ENCODE measurements at regions of chr14 and their contacts with region 1.

Region 1: DNA sequence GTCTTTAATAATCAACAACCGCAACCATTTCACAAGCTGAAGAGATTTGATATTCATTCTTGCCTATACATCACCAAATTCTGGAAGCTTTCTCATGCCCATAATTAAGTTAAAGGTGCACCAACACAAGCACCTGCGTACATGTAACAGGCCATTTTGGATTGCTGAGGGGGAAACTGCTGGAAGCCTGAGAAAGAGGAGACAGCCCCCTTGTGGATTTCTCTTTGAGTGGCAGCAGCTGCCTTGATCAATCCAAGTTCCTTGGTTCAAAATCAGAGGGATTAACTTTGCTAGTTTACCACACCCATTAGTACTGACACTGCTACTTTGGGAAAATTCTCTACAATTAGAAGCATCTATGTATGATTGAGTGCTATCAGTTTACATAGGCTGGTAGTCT is 321.1 kb downstream of the NOVA1 start:
- DNase-seq: no peak
- H3K4me3 ChIP-seq: no peak overlapping the region
- H3K27ac ChIP-seq: no peak overlapping the region
- H3K4me1 ChIP-seq: peaks cover 0 to 5% (median under 1%) of the 10 kb centered on the region in 4 experiments; a peak in 2 of 7 replicates
- H3K27me3 ChIP-seq: no peaks in the 10 kb centered on the region
- CTCF ChIP-seq: peak; percentile 39 to 75 (median 74)
- EP300 ChIP-seq: no peak
- POLR2A ChIP-seq: no peak
- RAD21 ChIP-seq: peak; percentile 87 to 89

Region 2: GRCh38 chr14:25833341-25834126 is 443.2 kb before region 1 on chr14:
- CTCF ChIA-PET with region 1: interaction called, 12 read pairs
- POLR2A ChIA-PET with region 1: no interaction called
- DNase-seq: peak in 1 of 2 experiments; percentile 48
- H3K4me3 ChIP-seq: no peak overlapping the region
- H3K27ac ChIP-seq: no peak overlapping the region
- H3K4me1 ChIP-seq: peaks cover 0 to 2% (median 0%) of the 10 kb centered on the region in 4 experiments; a peak in 1 of 7 replicates
- H3K27me3 ChIP-seq: no peaks in the 10 kb centered on the region
- CTCF ChIP-seq: peak; percentile 56 to 72 (median 70)
- EP300 ChIP-seq: no peak
- POLR2A ChIP-seq: no peak
- RAD21 ChIP-seq: peak; percentile 87 to 92

Region 3: DNA sequence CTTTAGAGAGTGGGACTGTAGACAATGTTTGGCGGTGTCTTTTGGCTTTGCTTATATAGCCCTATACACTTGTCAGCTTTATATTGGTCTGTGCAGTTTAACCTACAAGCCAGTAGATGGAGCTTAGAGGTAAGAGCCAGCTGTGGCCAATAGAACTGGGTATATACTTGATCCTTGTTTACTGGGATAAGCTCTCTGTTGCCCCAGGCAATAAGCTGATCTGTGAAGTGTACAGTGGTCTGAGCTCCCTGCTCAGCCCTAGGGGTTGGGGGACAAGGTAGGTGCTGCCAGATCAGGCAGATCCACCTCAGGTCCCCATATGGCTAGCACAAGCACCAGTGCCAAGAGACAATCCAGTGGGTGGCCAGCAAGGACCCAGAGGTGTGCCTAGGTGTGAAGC is 113.0 kb before region 1 on chr14:
- CTCF ChIA-PET with region 1: interaction called, 26 read pairs
- POLR2A ChIA-PET with region 1: no interaction called
- DNase-seq: peak in 1 of 2 experiments; percentile 47
- H3K4me3 ChIP-seq: no peak overlapping the region
- H3K27ac ChIP-seq: no peak overlapping the region
- H3K4me1 ChIP-seq: no peaks in the 10 kb centered on the region
- H3K27me3 ChIP-seq: no peaks in the 10 kb centered on the region
- CTCF ChIP-seq: peak in 2 of 3 experiments; percentile 49 to 59; a peak in 2 of 4 replicates
- EP300 ChIP-seq: no peak
- POLR2A ChIP-seq: no peak
- RAD21 ChIP-seq: peak; percentile 71 to 73

Region 4: GRCh38 chr14:26255213-26255612 is 21.5 kb before region 1 on chr14:
- CTCF ChIA-PET with region 1: interaction called, 13 read pairs
- POLR2A ChIA-PET with region 1: no interaction called
- DNase-seq: no peak
- H3K4me3 ChIP-seq: no peak overlapping the region
- H3K27ac ChIP-seq: no peak overlapping the region
- H3K4me1 ChIP-seq: no peaks in the 10 kb centered on the region
- H3K27me3 ChIP-seq: no peaks in the 10 kb centered on the region
- CTCF ChIP-seq: peak in 2 of 3 experiments; percentile 43 to 58; a peak in 3 of 4 replicates
- EP300 ChIP-seq: no peak
- POLR2A ChIP-seq: no peak
- RAD21 ChIP-seq: peak; percentile 58 to 65

Region 5: DNA sequence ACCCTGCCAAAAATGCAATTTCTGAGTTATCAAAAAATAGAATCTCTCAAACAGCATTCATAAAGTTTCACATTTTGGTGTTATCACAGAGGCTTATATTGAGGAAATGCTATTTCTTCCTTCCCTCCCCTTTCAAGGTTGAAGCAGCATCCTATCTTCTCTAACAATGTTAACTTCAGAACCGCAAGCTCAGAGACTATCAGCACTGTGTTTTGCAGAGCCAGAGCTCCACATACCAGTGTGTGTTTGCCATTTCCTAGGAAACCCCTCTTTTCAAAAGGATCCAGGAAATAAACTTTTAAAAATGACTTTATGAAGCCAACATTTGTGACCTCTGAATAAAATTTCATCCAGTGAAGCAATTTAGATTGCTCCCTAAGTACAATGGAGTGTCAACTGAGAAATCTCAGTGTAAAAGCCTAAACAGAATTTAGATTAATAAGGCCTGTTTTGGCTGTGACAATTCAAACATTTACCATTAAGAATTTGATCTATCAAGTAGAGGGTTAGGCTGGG is 11.5 kb before region 1 on chr14:
- CTCF ChIA-PET with region 1: interaction called, 25 read pairs
- POLR2A ChIA-PET with region 1: no interaction called
- DNase-seq: no peak
- H3K4me3 ChIP-seq: no peak overlapping the region
- H3K27ac ChIP-seq: no peak overlapping the region
- H3K4me1 ChIP-seq: peaks cover 2 to 13% (median 9%) of the 10 kb centered on the region in 4 experiments; a peak in 6 of 7 replicates
- H3K27me3 ChIP-seq: no peaks in the 10 kb centered on the region
- CTCF ChIP-seq: no peak
- EP300 ChIP-seq: no peak
- POLR2A ChIP-seq: no peak
- RAD21 ChIP-seq: no peak